Right ventricle myocardium superior (tissue), 1 donor: ENCODE measurements at regions of chr7 and their contacts with region 1.

Region 1: GRCh38 chr7:92781117-92781720 is 55.2 kb downstream of the CDK6 start:
- DNase-seq: peak; percentile 52
- ATAC-seq: peak; percentile 71

Region 2: GRCh38 chr7:92691578-92691977 is 89.6 kb before region 1 on chr7:
- intact Hi-C with region 1: loop called (anchors 10 kb)
- DNase-seq: no peak
- ATAC-seq: no peak